Activated T-helper 1 cell treated with anti-CD3 and anti-CD28 coated beads, Interleukin-12 subunit alpha, Interleukin-12 subunit beta, Interleukin-2, Interleukin-4 antibody, amounts not matched to agents 30 ng/mL and 10 ng/mL and 1 ng/mL, durations not matched to agents 14 hours and 24 hours and 36 hours (primary cell): ENCODE measurements at regions of chr7 and their contacts with region 1.

Region 1: DNA sequence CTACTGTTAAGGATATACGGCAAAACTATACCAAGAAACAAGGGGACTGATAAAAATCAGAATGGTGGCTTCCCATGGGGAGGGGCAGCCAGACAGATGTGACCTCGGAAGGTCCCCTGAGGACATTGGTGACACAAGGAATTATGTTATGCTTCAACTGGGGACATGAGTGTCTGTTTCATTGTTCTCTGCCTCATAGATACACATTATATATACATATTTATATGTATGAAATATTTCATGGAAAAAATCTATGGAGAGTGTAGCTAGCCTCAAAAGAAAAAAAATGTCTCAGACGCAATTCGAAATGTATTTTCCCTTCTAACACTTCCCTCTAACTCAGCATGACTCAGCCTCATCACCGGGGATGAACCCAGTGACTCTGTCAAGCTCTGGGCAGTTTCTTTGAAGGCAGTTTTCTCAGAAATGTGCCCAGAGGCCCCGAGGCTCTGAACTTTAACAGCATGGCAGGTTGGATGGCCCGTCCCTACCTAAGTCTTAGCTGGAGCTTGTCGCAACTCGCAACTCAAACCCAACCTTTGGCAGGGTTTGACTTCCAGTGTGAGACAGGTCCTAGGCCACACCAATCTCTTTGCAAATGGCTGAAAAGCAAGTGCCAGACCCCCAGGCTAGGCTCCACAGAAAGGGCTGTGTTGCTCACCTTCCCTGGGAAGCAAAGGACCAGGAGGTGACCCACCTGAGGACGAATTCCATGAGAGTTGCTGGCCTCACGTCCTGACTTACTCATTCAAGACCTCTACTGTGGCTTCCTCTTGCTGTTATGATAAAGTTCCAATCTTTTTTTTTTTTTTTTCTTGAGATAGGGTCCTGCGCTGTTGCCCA is 86.9 kb downstream of the CARD11 start:
- DNase-seq: peak; percentile 44
- H3K4me3 Mint-ChIP-seq: peak overlapping the region; percentile 27
- H3K27ac Mint-ChIP-seq: peak overlapping the region; percentile 92
- H3K4me1 Mint-ChIP-seq: peaks cover 71% of the 10 kb centered on the region
- H3K27me3 Mint-ChIP-seq: no peaks in the 10 kb centered on the region

Region 2: DNA sequence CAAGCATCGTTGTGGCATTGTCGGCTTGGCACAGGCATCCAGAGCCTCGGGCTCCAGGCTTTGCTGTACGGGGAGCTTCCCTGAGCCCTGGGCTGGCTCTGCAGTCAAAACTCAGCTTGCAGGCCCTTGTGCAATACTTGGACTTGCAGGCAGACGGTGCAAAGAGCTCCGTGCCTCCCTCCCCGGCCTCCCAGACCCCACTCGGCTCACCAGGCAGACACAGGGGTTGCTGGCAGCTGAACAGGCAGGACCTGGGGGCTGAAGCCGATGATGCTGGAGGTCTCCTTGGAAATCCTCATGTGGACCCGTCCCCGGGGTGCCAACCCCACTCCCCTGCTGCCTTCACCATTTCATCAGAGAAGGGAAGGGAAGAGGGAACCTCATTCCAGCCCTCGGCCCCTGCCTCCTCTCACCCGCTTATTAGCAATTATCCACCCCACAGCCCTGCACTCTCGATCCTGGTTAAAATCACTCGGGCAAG is 53.0 kb before region 1 on chr7:
- intact Hi-C with region 1: loop called (anchors 1 kb)
- DNase-seq: no peak
- H3K4me3 Mint-ChIP-seq: no peak overlapping the region
- H3K27ac Mint-ChIP-seq: peak overlapping the region; percentile 87
- H3K4me1 Mint-ChIP-seq: peaks cover 30% of the 10 kb centered on the region
- H3K27me3 Mint-ChIP-seq: no peaks in the 10 kb centered on the region

Region 3: GRCh38 chr7:2921653-2922347 is 34.9 kb before region 1 on chr7:
- intact Hi-C with region 1: no loop called
- DNase-seq: no peak
- H3K4me3 Mint-ChIP-seq: no peak overlapping the region
- H3K27ac Mint-ChIP-seq: no peak overlapping the region
- H3K4me1 Mint-ChIP-seq: peaks cover 14% of the 10 kb centered on the region
- H3K27me3 Mint-ChIP-seq: no peaks in the 10 kb centered on the region

Region 4: GRCh38 chr7:3028071-3028757 is 71.5 kb after region 1 on chr7:
- intact Hi-C with region 1: loop called (anchors 2 kb)
- DNase-seq: peak; percentile 8
- H3K4me3 Mint-ChIP-seq: peak overlapping the region; percentile 60
- H3K27ac Mint-ChIP-seq: peak overlapping the region; percentile 92
- H3K4me1 Mint-ChIP-seq: peaks cover 60% of the 10 kb centered on the region
- H3K27me3 Mint-ChIP-seq: no peaks in the 10 kb centered on the region